PC-9 (cell line): ENCODE measurements at regions of chr21 and their contacts with region 1.

Region 1: DNA sequence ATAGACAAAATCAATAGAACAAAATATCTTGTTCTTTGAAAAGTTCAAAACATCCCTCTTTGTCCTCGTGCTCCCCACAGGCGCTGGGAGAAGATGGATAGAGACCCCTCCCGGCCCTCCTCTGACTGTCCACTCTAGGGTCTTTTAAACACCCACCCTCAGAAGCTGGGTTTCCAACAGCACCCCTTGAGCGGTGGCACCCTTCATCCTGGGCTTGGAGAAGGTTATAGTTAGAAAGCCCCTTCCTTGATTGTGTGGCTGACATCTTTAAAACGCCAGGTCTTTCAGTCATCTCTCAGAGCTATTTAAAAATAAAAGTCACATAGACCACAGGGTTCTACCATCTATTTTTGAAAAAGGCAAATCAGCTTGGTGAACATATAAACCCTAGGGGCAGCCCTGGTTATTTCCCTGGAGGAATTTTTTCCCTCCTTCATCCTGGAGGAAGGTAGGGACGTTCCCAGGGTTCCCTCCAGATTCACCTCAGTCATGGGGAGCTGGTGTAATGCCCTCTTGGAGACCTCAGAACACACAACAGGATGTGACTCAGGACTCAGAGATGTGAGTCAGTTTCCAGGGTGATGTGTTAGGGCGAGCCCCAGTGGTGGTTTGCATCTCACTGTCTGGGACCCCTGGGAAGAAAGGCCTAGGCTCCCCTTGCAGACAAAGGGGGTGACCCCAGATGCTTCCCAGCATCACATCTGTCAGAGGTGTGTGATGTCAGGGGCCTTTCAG is 138.5 kb downstream of the CLIC6 start:
- DNase-seq: peak; percentile 59 to 85
- H3K4me3 ChIP-seq: no peak overlapping the region
- H3K27ac ChIP-seq: peak overlapping the region; percentile 100
- H3K4me1 ChIP-seq: peaks cover 76% of the 10 kb centered on the region
- H3K27me3 ChIP-seq: no peaks in the 10 kb centered on the region
- CTCF ChIP-seq: no peak

Region 2: GRCh38 chr21:34820051-34820450 is 12.7 kb after region 1 on chr21:
- CTCF ChIA-PET with region 1: interaction called, 5 read pairs
- POLR2A ChIA-PET with region 1: interaction called, 10 read pairs
- intact Hi-C with region 1: no loop called
- DNase-seq: no peak
- H3K4me3 ChIP-seq: no peak overlapping the region
- H3K27ac ChIP-seq: no peak overlapping the region
- H3K4me1 ChIP-seq: peaks cover 6% of the 10 kb centered on the region
- H3K27me3 ChIP-seq: no peaks in the 10 kb centered on the region
- CTCF ChIP-seq: no peak

Region 3: DNA sequence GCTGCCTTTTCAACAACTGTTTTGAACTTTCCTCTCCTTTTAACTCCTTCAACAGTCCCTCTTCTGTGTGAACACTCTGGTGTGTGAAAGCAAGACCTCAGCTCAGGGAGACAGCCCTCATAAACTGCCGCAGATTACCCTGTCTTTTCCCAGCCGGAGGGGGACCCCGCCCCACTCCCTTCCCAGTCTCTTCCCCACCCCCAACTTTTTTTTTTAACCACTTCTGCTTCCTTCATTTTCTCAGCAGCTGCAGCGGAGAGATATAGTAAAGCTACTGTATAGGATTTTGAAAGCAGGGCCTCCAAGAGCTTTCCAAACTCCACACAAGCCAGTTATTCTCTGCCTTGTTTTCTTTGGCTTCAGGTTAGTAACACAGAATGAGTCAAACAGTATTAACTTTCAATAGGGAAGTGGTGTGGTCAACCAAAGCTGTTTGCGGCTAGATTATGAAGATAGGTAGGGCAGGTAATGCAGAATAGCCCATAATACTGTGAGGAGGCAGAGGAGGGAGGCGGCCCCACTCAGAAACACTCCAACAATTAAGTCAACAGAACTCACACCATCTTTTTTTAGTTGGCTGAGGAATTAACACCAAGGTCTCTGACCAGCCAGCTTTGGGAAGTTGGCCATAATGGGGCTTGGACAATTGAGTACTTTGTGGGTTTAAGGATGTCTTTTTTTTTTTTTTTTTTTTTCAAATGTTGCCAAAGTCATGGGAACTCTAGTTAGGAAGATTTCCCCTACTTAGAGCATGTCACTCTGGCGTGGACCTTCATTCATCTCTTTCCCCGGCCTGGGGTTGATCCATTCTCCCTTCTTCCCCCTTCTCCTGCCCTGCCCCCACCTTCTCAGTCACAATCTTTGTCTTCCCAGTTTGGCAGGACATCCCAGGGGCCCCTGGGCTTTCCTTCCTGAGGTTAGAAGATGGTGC is 38.5 kb after region 1 on chr21:
- CTCF ChIA-PET with region 1: no interaction called
- POLR2A ChIA-PET with region 1: no interaction called
- intact Hi-C with region 1: loop called (anchors 1 kb)
- DNase-seq: peak; percentile 72 to 94
- H3K4me3 ChIP-seq: peak overlapping the region; percentile 19; the same call in 1 of the 2 replicates
- H3K27ac ChIP-seq: peak overlapping the region; percentile 89
- H3K4me1 ChIP-seq: peaks cover 68% of the 10 kb centered on the region
- H3K27me3 ChIP-seq: no peaks in the 10 kb centered on the region
- CTCF ChIP-seq: no peak

Region 4: GRCh38 chr21:34857874-34858273 is 50.6 kb after region 1 on chr21:
- CTCF ChIA-PET with region 1: no interaction called
- POLR2A ChIA-PET with region 1: interaction called, 11 read pairs
- intact Hi-C with region 1: no loop called
- DNase-seq: no peak
- H3K4me3 ChIP-seq: no peak overlapping the region
- H3K27ac ChIP-seq: no peak overlapping the region
- H3K4me1 ChIP-seq: no peaks in the 10 kb centered on the region
- H3K27me3 ChIP-seq: no peaks in the 10 kb centered on the region
- CTCF ChIP-seq: no peak

Region 5: GRCh38 chr21:34865928-34866284 is 58.6 kb after region 1 on chr21:
- CTCF ChIA-PET with region 1: no interaction called
- POLR2A ChIA-PET with region 1: interaction called, 3 read pairs
- intact Hi-C with region 1: loop called (anchors 2 kb)
- DNase-seq: peak; percentile 69 to 89
- H3K4me3 ChIP-seq: 0 out of 2 replicates have a peak overlapping the region, but pooled peaks have one; percentile 11
- H3K27ac ChIP-seq: peak overlapping the region; percentile 88
- H3K4me1 ChIP-seq: peaks cover 69% of the 10 kb centered on the region
- H3K27me3 ChIP-seq: no peaks in the 10 kb centered on the region
- CTCF ChIP-seq: no peak

Region 6: DNA sequence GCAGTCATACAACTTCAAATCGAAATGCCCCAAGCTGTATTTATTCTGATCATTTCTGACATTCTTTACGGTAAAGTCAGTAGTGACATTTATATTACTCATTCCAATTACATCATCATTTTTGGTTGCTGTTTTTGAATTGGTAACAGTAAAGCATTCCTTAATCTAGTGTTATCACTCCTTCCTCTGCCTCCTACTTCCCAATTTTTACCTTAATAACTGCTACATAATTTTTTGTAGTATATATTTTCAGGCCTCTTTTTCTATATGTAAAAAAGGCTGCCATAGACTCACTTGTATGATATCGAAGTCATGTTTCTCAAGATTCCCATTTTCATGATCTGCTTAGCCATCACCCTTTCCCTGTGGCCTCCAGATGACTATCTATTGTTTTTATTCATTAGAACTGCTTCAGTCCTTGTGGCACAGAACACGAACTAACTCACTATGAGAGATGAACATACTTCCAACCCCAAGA is 74.6 kb after region 1 on chr21:
- CTCF ChIA-PET with region 1: no interaction called
- POLR2A ChIA-PET with region 1: no interaction called
- intact Hi-C with region 1: loop called (anchors 5 kb)
- DNase-seq: peak in 1 of 2 experiments; percentile 87
- H3K4me3 ChIP-seq: peak overlapping the region; percentile 97
- H3K27ac ChIP-seq: peak overlapping the region; percentile 99
- H3K4me1 ChIP-seq: peaks cover 69% of the 10 kb centered on the region
- H3K27me3 ChIP-seq: no peaks in the 10 kb centered on the region
- CTCF ChIP-seq: no peak

Region 7: GRCh38 chr21:35324372-35325220 is 517.3 kb after region 1 on chr21:
- CTCF ChIA-PET with region 1: no interaction called
- POLR2A ChIA-PET with region 1: no interaction called
- intact Hi-C with region 1: no loop called
- DNase-seq: peak in 1 of 2 experiments; percentile 11
- H3K4me3 ChIP-seq: no peak overlapping the region
- H3K27ac ChIP-seq: no peak overlapping the region
- H3K4me1 ChIP-seq: no peaks in the 10 kb centered on the region
- H3K27me3 ChIP-seq: no peaks in the 10 kb centered on the region
- CTCF ChIP-seq: no peak